ENCODE measurements at regions of chr9 and their contacts with region 1.

Region 1: GRCh38 chr9:38651400-38652042 is 31.1 kb upstream of the ANKRD18A start:
- DNase-seq: no peak
- H3K4me3 ChIP-seq: no peak overlapping the region
- H3K4me1 ChIP-seq: no peaks in the 10 kb centered on the region
- H3K27me3 ChIP-seq: no peaks in the 10 kb centered on the region

Region 2: DNA sequence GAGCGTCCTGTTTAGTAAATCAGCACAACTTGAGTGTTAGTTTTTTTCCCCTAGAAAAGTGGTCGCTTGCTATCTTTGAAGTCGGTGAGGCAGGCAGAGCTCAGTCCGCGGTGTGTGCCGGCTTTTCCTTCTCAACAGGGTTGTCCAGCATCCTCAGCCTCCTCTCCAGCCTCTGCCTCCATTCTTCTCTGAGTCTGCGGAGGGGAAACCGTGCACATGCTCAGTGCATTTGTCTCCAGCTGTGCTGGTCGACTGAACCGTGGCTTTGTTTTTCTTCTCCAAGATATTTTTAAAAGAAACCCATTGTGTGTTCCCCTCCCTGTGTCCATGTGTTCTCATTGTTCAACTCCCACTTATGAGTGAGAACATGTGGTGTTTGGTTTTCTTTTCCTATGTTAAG is 43.2 kb after region 1 on chr9:
- in situ Hi-C with region 1: loop called (anchors 5 kb)
- DNase-seq: no peak
- H3K4me3 ChIP-seq: no peak overlapping the region
- H3K4me1 ChIP-seq: peaks cover 7% of the 10 kb centered on the region
- H3K27me3 ChIP-seq: no peaks in the 10 kb centered on the region

Measured in HAP-1 (cell line).